ENCODE measurements at regions of chr15 and their contacts with region 1.

Region 1: DNA sequence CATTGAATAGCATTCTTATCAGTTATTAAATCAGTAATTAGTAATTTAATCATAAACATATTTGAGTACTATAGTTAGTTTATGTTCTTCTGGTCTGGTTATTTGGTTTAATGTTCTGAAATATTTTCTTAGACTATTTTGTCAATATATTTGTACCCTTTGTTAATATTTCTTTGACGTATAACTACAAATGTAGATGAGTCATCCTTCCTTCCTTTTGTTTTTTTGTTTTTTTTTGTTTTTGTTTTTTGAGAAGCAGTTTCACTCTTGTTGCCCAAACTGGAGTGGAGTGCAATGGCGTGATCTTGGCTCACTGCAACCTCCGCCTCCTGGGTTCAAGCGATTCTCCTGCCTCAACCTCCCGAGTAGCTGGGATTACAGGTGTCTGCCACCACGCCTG is 17.4 kb upstream of the EIF3J start:
- DNase-seq: no peak

Region 2: GRCh38 chr15:44441095-44441501 is 78.4 kb before region 1 on chr15:
- intact Hi-C with region 1: loop called (anchors 10 kb)
- DNase-seq: no peak